HepG2 (cell line): ENCODE measurements at regions of chr2 and their contacts with region 1.

Region 1: DNA sequence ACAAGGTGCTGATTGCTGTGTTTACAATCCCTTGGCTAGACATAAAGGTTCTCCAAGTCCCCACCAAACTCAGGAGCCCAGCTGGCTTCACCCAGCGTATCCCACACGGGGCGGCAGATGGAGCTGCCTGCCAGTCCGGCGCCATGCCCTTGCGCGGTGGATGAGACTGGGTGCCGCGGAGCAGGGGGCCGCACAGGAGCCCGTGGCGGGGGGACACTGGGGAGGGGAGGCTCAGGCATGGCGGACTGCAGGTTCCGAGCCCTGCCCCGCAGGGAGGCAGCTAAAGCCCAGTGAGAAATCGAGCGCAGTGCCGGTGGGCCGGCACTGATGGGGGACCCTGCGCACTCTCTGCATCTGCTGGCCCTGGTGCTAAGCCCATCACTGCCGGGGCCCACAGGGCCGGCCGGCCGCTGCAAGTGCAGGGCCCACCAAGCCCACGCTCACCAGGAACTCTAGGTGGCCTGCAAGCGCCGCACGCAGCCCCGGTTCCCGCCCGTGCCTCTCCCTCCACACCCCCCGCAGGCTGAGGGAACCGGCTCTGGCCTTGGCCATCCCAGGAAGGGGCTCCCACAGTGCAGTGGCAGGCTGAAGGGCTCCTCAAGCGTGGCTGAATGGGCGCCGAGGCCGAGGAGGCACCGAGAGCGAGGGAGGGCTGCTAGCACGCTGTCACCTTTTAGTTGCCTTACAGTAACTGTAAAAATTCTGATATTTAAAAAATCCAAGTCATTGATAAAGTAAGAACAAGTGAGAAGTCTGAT is 930.0 kb upstream of the FSHR start:
- DNase-seq: no peak
- ATAC-seq: no peak
- H3K4me3 ChIP-seq: no peak overlapping the region
- H3K27ac ChIP-seq: no peak overlapping the region
- H3K4me1 ChIP-seq: no peaks in the 10 kb centered on the region
- H3K27me3 ChIP-seq: no peaks in the 10 kb centered on the region; a peak in 1 of 5 replicates
- CTCF ChIP-seq: no peak
- EP300 ChIP-seq: no peak
- POLR2A ChIP-seq: no peak
- RAD21 ChIP-seq: no peak

Region 2: GRCh38 chr2:50039445-50039844 is 44.8 kb before region 1 on chr2:
- CTCF ChIA-PET with region 1: no interaction called
- POLR2A ChIA-PET with region 1: no interaction called
- in situ Hi-C with region 1: no loop called
- intact Hi-C with region 1: no loop called
- DNase-seq: no peak
- ATAC-seq: no peak
- H3K4me3 ChIP-seq: no peak overlapping the region
- H3K27ac ChIP-seq: no peak overlapping the region
- H3K4me1 ChIP-seq: no peaks in the 10 kb centered on the region
- H3K27me3 ChIP-seq: no peaks in the 10 kb centered on the region
- CTCF ChIP-seq: no peak
- EP300 ChIP-seq: no peak
- POLR2A ChIP-seq: no peak
- RAD21 ChIP-seq: no peak

Region 3: GRCh38 chr2:50066873-50067272 is 17.4 kb before region 1 on chr2:
- CTCF ChIA-PET with region 1: no interaction called
- POLR2A ChIA-PET with region 1: no interaction called
- in situ Hi-C with region 1: no loop called
- intact Hi-C with region 1: loop called (anchors 2 kb)
- DNase-seq: no peak
- ATAC-seq: no peak
- H3K4me3 ChIP-seq: no peak overlapping the region
- H3K27ac ChIP-seq: no peak overlapping the region
- H3K4me1 ChIP-seq: no peaks in the 10 kb centered on the region
- H3K27me3 ChIP-seq: no peaks in the 10 kb centered on the region
- CTCF ChIP-seq: no peak
- EP300 ChIP-seq: no peak
- POLR2A ChIP-seq: no peak
- RAD21 ChIP-seq: no peak

Region 4: DNA sequence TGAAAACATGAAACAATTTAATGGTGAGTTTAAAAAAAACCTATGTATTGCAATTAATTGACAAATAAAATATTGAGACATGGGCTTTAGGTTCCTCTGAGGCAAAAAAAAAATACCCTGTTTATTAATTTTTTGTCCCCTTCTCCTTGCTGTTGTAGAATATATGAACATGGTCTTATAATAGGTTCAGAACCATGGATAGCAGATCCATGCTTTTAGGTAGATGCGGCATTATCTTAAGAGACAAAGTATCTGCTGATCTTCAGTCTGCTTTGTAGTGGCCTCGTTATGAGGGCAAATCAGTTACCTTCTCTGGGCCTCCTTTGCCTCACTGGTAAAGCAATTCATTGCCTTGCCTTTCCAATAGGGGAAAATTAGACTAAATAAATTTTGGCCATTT is 96.9 kb after region 1 on chr2:
- CTCF ChIA-PET with region 1: no interaction called
- POLR2A ChIA-PET with region 1: no interaction called
- in situ Hi-C with region 1: no loop called
- intact Hi-C with region 1: no loop called
- DNase-seq: no peak
- ATAC-seq: no peak
- H3K4me3 ChIP-seq: no peak overlapping the region
- H3K27ac ChIP-seq: no peak overlapping the region
- H3K4me1 ChIP-seq: no peaks in the 10 kb centered on the region
- H3K27me3 ChIP-seq: no peaks in the 10 kb centered on the region
- CTCF ChIP-seq: no peak
- EP300 ChIP-seq: no peak
- POLR2A ChIP-seq: no peak
- RAD21 ChIP-seq: no peak